Endothelial cell of umbilical vein (primary cell): ENCODE measurements at regions of chr6 and their contacts with region 1.

Region 1: DNA sequence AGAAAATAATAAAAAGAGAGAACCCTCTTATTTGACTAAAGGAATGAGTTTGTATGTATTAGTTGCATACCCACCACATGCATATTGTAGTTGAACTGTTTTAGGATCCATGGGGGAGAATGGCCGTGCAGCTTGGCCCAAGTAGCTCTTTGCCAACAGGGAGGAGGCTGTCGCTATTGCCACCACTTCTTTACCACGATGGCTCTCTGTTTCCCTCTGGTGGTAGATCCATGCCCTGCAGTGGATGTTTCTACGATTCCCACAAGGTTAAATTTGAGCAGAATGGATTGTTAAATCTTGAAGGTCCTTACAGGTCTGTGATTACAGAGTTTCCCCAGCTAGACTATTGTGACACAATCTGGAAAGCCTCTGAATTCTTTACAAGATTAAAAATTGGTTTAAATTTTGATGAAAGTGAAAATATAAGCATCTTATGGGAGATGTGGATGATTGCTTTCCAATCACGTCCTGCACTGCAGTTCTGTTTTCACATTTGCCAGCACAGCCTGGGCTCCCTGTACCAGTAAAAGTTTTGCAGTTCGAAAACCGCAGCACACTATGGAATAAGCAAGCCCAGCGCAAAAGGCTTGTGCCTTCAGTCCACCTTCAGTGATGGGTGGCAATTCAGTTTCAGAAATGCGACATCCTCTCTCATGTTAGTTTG is 34.4 kb upstream of the FNDC1 start:
- DNase-seq: peak; percentile 62
- H3K4me3 ChIP-seq: no peak overlapping the region
- H3K27ac ChIP-seq: no peak overlapping the region
- H3K4me1 ChIP-seq: no peaks in the 10 kb centered on the region
- H3K27me3 ChIP-seq: peaks cover 0 to 2% of the 10 kb centered on the region in 2 experiments
- CTCF ChIP-seq: peak; percentile 80 to 86
- POLR2A ChIP-seq: no peak

Region 2: DNA sequence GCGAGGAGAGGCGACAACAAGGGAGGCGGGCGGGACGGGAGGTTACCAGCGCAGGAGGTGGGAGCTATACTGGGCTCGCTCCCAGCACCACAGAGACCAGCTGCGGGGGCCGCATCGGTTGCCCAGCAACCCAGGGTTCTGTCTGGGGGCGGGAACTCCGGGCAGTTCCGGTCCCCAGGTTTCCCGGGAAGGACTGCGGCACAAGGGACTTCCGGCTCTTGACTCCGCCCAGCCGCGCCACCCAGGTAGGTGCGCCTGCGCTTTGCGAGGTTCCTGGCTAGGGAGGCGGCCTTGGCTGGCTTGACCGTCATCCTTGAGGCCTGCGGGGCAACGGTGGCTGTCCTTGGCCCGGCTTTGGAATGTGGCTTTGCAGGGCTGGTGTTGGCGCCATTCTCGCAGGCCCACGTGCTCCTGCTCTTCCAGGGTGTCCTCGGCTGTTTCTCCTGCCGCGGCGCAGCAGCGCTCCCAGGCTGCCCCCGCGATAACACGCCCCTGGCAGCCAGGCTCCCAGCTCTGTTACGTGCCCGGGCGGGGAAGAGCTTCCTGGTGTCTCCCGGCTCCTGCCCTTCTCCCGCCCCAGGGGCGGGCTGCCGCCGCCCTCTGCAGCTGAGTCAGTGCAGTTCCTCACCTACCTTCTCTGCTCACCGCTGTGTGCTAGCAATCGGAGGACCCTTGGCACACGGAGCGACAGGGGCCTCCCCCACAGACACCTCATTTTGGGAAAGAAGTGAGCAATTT is 135.0 kb before region 1 on chr6 and contains the start of gene RSPH3:
- CTCF ChIA-PET with region 1: interaction called, 11 read pairs
- POLR2A ChIA-PET with region 1: no interaction called
- dilution Hi-C with region 1: no loop called
- intact Hi-C with region 1: no loop called
- DNase-seq: peak; percentile 66
- H3K4me3 ChIP-seq: peak within 1 kb of the TSS; percentile 36 to 78 (median 76)
- H3K27ac ChIP-seq: peak within 1 kb of the TSS; percentile 47
- H3K4me1 ChIP-seq: peaks cover 14% of the 10 kb centered on the region
- H3K27me3 ChIP-seq: no peaks in the 10 kb centered on the region
- CTCF ChIP-seq: peak in 1 of 2 donors; percentile 10
- POLR2A ChIP-seq: peak; percentile 88
- total RNA-seq, gene RSPH3: 3.0 and 3.3 TPM in 2 replicates

Region 3: DNA sequence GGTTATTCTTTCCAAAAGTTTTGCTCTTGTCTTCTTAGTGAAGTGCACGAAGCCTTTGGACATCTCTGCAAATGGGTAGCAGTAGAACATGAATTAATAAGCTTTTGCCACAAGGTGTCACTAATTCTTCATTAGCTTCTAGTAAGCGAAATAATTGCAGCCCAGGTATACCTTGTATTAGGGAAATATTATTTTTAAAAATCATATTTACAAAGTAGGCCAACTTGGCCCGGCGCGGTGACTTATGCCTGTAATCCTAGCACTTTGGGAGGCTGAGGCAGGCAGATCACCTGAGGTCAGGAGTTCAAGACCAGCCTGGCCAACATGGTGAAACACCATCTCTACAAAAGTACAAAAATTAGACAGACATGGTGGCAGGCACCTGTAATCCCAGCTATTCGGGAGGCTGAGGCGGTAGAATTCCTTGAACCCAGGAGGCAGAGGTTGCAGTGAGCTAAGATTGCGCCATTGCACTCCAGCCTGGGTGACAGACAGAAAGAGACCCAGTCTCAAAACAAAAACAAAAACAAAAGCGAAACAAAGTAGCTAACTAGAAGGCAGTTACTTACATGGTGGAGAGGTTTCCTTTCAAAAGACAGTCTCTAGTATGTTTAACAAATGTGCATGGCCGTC is 126.1 kb before region 1 on chr6:
- CTCF ChIA-PET with region 1: interaction called, 165 read pairs
- POLR2A ChIA-PET with region 1: no interaction called
- dilution Hi-C with region 1: no loop called
- intact Hi-C with region 1: loop called (anchors 1 kb)
- DNase-seq: peak; percentile 30
- H3K4me3 ChIP-seq: no peak overlapping the region
- H3K27ac ChIP-seq: no peak overlapping the region
- H3K4me1 ChIP-seq: no peaks in the 10 kb centered on the region
- H3K27me3 ChIP-seq: no peaks in the 10 kb centered on the region
- CTCF ChIP-seq: peak; percentile 14 to 21
- POLR2A ChIP-seq: no peak